Natural killer cell (primary cell): ENCODE measurements at regions of chr13 and their contacts with region 1.

Region 1: DNA sequence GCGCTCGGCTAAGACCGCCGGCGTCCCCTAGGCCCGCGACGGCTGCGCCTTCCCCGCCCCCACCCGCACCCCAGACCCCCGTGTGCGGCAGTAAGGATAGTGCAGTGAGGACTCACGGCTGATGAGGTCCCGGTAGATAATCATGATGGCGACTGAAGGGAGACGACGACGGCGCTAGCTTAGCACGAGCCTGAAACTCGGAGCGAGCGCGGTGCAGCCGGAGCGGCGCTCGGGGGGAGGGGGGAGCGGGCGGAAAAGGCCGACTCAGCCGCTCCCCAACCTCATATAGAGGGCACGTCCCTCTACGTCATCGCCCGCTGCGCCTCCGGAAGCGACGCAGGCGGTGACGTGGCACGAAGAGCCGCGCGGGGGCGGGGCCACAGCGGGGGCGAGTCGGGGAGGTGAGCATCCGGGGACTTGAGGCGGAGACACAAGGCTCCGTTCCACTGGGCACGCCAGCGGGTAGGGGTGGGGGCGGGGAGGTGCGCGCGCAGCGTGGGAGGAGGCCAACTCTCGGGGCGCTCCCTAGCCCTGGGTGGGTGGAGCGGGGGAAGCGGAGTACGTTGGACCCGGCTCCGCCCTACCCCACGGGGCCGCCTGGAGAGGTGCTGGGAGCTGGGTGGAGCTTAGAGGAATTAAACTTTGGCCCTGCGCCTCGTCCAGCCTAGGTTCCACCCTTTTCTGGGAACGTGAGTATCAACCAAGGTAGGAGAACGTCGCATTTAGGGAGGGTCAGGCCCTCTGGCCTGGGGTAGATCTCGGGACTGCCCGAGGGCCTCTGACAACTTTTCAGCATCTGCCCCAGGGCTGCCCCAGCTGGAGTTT is at the start of gene TPT1:
- DNase-seq: peak; percentile 99 to 100
- ATAC-seq: peak; percentile 81 to 93 (median 84)
- H3K4me3 ChIP-seq: peak within 1 kb of the TSS; percentile 82
- H3K4me3 Mint-ChIP-seq: peak within 1 kb of the TSS; percentile 94
- H3K27ac ChIP-seq: peak within 1 kb of the TSS; percentile 95
- H3K27ac Mint-ChIP-seq: peak within 1 kb of the TSS; percentile 72 to 98
- H3K4me1 ChIP-seq: peaks cover 18% of the 10 kb centered on the region
- H3K4me1 Mint-ChIP-seq: peaks cover 47 to 56% of the 10 kb centered on the region in 2 donors
- H3K27me3 ChIP-seq: no peaks in the 10 kb centered on the region
- H3K27me3 Mint-ChIP-seq: no peaks in the 10 kb centered on the region
- CTCF ChIP-seq: no peak
- total RNA-seq, gene TPT1: 2,606 to 3,166 (median 3,085) TPM

Region 2: GRCh38 chr13:44972956-44973581 is 368.1 kb before region 1 on chr13:
- intact Hi-C with region 1: no loop called
- DNase-seq: peak in 1 of 2 donors; percentile 48
- ATAC-seq: no peak
- H3K4me3 ChIP-seq: no peak overlapping the region
- H3K4me3 Mint-ChIP-seq: no peak overlapping the region
- H3K27ac ChIP-seq: no peak overlapping the region
- H3K27ac Mint-ChIP-seq: no peak overlapping the region
- H3K4me1 ChIP-seq: no peaks in the 10 kb centered on the region
- H3K4me1 Mint-ChIP-seq: no peaks in the 10 kb centered on the region
- H3K27me3 ChIP-seq: no peaks in the 10 kb centered on the region
- H3K27me3 Mint-ChIP-seq: no peaks in the 10 kb centered on the region
- CTCF ChIP-seq: peak; percentile 46

Region 3: DNA sequence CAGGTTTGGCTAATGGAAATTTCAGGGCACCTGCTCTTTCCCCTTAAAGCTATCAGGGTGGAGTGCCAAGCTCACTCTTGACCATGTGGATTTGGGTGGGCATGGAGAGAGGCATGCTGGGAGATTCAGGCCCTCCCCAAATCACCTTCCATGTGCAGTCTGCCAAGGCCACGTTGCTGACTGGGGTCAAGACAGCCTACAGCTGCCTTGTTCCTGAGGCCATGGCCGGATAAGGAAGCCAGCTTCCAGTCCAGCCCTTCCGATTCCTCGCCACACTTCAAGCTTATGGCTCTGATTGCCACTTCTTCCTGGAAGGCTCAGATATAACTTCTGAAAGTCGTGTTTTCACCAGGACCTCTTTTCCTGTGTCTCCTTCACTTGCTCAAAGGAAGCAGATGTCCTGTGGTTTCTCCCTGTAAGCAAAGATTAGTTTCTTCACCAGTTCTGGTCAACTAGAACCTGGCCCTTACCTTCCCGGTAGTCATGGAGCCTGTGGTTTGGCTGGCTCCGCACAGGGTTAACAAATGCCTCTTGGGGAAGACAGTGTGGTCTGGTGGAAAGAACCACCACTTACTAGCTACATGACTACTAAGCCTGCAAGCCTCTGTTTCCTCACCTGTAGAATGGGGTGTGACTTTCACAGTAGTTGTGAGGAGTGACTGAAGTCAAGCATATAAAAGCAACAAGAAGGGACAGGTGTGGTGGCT is 16.0 kb after region 1 on chr13:
- intact Hi-C with region 1: no loop called
- DNase-seq: no peak
- ATAC-seq: no peak
- H3K4me3 ChIP-seq: no peak overlapping the region
- H3K4me3 Mint-ChIP-seq: no peak overlapping the region
- H3K27ac ChIP-seq: no peak overlapping the region
- H3K27ac Mint-ChIP-seq: peak overlapping the region; percentile 75 to 76
- H3K4me1 ChIP-seq: peaks cover 9% of the 10 kb centered on the region
- H3K4me1 Mint-ChIP-seq: peaks cover 14 to 16% of the 10 kb centered on the region in 2 donors
- H3K27me3 ChIP-seq: no peaks in the 10 kb centered on the region
- H3K27me3 Mint-ChIP-seq: no peaks in the 10 kb centered on the region
- CTCF ChIP-seq: no peak

Region 4: GRCh38 chr13:45367358-45367757 is 26.2 kb after region 1 on chr13:
- intact Hi-C with region 1: loop called (anchors 1 kb)
- DNase-seq: peak; percentile 61 to 92
- ATAC-seq: peak; percentile 96 to 97 (median 96)
- H3K4me3 ChIP-seq: no peak overlapping the region
- H3K4me3 Mint-ChIP-seq: peak overlapping the region; percentile 75
- H3K27ac ChIP-seq: peak overlapping the region; percentile 36
- H3K27ac Mint-ChIP-seq: peak overlapping the region; percentile 60 to 73
- H3K4me1 ChIP-seq: peaks cover 34% of the 10 kb centered on the region
- H3K4me1 Mint-ChIP-seq: peaks cover 34 to 50% of the 10 kb centered on the region in 2 donors
- H3K27me3 ChIP-seq: no peaks in the 10 kb centered on the region
- H3K27me3 Mint-ChIP-seq: no peaks in the 10 kb centered on the region
- CTCF ChIP-seq: no peak

Region 5: DNA sequence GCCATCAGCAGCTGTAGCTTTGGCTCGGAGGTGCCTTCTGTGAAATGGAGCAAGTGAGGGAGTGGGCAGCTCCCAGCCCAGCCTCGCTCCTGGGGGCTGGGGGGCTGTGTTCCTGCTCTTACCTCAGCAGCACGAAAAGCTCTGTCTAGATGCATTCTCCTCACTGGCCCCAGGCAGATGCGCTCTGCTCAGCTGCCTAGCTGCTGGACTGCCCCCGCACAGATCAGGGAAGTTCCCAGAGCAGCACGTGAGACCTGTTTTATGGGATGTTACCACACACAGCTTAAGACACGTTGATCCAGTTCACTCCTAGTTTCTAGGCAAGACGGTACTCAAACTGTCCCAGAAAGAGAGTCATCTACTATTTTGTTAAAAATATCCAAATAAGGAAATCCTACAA is 827.2 kb after region 1 on chr13:
- intact Hi-C with region 1: no loop called
- DNase-seq: peak; percentile 50 to 83
- ATAC-seq: peak; percentile 57 to 84 (median 73)
- H3K4me3 ChIP-seq: no peak overlapping the region
- H3K4me3 Mint-ChIP-seq: peak overlapping the region; percentile 95
- H3K27ac ChIP-seq: peak overlapping the region; percentile 70
- H3K27ac Mint-ChIP-seq: peak overlapping the region; percentile 84 to 96
- H3K4me1 ChIP-seq: peaks cover 69% of the 10 kb centered on the region
- H3K4me1 Mint-ChIP-seq: peaks cover 93 to 94% of the 10 kb centered on the region in 2 donors
- H3K27me3 ChIP-seq: no peaks in the 10 kb centered on the region
- H3K27me3 Mint-ChIP-seq: no peaks in the 10 kb centered on the region
- CTCF ChIP-seq: no peak